K562 (cell line): ENCODE measurements at regions of chr3 and their contacts with region 1.

Region 1: GRCh38 chr3:182404031-182404430 is 389.3 kb upstream of the ATP11B start:
- DNase-seq: no peak
- ATAC-seq: no peak
- H3K4me3 ChIP-seq: no peak overlapping the region
- H3K27ac ChIP-seq: no peak overlapping the region
- H3K4me1 ChIP-seq: no peaks in the 10 kb centered on the region
- H3K27me3 ChIP-seq: no peaks in the 10 kb centered on the region
- CTCF ChIP-seq: no peak
- EP300 ChIP-seq: no peak
- POLR2A ChIP-seq: no peak
- RAD21 ChIP-seq: no peak

Region 2: DNA sequence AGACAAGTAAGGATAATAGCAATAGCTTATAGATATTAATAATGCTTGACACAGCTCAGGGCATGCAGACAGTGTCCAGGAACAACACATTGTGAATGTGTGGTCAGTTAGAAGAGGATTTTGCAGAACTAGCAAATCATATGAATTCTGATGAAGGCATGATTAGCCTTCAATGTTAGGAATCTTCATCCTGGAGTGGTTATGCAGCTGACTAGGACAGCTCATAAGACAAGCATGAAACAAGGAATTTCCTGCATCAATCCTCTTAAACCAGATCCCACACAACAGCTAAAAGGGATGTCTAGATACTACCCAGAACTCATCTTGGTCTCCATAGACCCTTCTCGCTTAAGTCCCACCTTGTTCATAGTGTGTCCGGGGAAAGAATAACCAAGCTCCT is 109.8 kb before region 1 on chr3:
- CTCF ChIA-PET with region 1: no interaction called
- POLR2A ChIA-PET with region 1: no interaction called
- in situ Hi-C with region 1: no loop called
- intact Hi-C with region 1: no loop called
- DNase-seq: no peak
- ATAC-seq: no peak
- H3K4me3 ChIP-seq: no peak overlapping the region
- H3K27ac ChIP-seq: no peak overlapping the region
- H3K4me1 ChIP-seq: no peaks in the 10 kb centered on the region
- H3K27me3 ChIP-seq: no peaks in the 10 kb centered on the region
- CTCF ChIP-seq: no peak
- EP300 ChIP-seq: no peak
- POLR2A ChIP-seq: no peak
- RAD21 ChIP-seq: no peak

Region 3: DNA sequence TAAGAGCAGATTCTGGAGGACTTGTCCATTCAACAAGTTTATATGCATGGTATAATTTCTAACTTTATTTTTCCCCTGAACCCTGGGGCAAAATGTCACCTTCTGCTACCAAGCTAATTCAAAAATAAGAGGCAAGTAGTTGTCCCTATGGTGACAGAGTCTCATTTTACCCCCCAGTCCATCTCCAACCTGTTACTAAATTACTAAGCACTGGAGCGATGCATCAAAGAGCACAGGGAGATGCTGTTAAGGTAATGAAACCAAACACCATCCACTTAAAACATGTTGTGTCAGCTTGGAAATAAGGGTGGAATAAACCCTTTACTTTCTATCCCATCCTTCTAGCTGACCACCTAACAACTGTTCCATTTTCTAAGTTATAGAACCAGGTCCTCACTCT is 28.1 kb before region 1 on chr3:
- CTCF ChIA-PET with region 1: no interaction called
- POLR2A ChIA-PET with region 1: no interaction called
- in situ Hi-C with region 1: no loop called
- intact Hi-C with region 1: loop called (anchors 1 kb)
- DNase-seq: no peak
- ATAC-seq: no peak
- H3K4me3 ChIP-seq: no peak overlapping the region
- H3K27ac ChIP-seq: no peak overlapping the region
- H3K4me1 ChIP-seq: no peaks in the 10 kb centered on the region
- H3K27me3 ChIP-seq: no peaks in the 10 kb centered on the region
- CTCF ChIP-seq: no peak
- EP300 ChIP-seq: no peak
- POLR2A ChIP-seq: no peak
- RAD21 ChIP-seq: no peak